ENCODE measurements at regions of chr4 and their contacts with region 1.

Region 1: GRCh38 chr4:72909461-72909860 is 160.1 kb downstream of the COX18 start:
- DNase-seq: no peak
- H3K4me3 ChIP-seq: no peak overlapping the region
- H3K27ac ChIP-seq: no peak overlapping the region
- H3K4me1 ChIP-seq: no peaks in the 10 kb centered on the region
- H3K27me3 ChIP-seq: no peaks in the 10 kb centered on the region
- CTCF ChIP-seq: peak; percentile 51

Region 2: DNA sequence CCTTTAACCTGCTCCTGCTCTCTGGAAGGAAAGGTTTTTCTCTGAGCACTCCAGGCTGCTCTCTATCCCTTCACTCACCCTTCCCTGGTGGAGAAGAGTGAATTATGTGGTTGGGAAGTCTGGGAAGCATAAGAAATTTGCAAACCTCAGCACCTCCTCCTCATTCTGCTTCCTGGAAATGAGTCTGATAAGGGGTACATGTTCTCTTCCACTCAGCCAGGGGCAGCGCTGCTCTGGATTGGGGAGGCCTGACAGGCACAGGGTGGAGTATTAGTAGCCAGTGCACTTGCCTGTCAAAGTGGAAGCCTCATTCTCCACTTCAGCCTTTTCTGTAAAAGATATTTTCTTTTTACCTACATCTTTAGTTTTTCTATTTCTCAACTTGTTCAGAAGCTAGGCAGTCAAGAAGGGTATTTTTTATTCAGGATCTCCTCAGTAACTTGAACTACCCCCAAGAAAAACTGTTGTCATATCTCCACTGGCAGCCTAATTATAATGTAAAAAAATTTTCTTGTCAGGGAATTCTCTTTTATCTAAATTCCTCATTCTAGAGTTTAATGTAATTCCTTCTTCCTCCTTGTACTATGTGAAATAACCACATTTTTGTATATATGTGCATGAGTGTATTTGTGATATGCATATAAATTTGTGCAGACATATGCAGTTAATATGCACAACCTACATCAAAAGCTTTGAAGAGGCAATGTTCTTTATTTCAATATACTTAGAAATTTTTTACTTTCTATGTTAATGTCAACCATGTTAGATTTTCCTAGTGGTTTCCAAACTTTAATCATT is 355.7 kb before region 1 on chr4:
- intact Hi-C with region 1: no loop called
- DNase-seq: no peak
- H3K4me3 ChIP-seq: no peak overlapping the region
- H3K27ac ChIP-seq: no peak overlapping the region
- H3K4me1 ChIP-seq: no peaks in the 10 kb centered on the region
- H3K27me3 ChIP-seq: no peaks in the 10 kb centered on the region
- CTCF ChIP-seq: no peak

Region 3: GRCh38 chr4:72701987-72702819 is 207.3 kb before region 1 on chr4:
- intact Hi-C with region 1: loop called (anchors 10 kb)
- DNase-seq: no peak
- H3K4me3 ChIP-seq: peak overlapping the region; percentile 57
- H3K27ac ChIP-seq: no peak overlapping the region
- H3K4me1 ChIP-seq: no peaks in the 10 kb centered on the region
- H3K27me3 ChIP-seq: no peaks in the 10 kb centered on the region
- CTCF ChIP-seq: peak; percentile 67

Measured in left ventricle myocardium inferior (tissue), 1 donor.